ENCODE measurements at regions of chr15 and their contacts with region 1.

Region 1: GRCh38 chr15:72252663-72253299 is 19.6 kb downstream of the PARP6 start:
- DNase-seq: no peak
- H3K4me3 ChIP-seq: no peak overlapping the region
- H3K4me3 Mint-ChIP-seq: no peak overlapping the region
- H3K27ac ChIP-seq: no peak overlapping the region
- H3K27ac Mint-ChIP-seq: no peak overlapping the region
- H3K4me1 ChIP-seq: peaks cover 9 to 13% of the 10 kb centered on the region in 2 donors
- H3K4me1 Mint-ChIP-seq: peaks cover 11% of the 10 kb centered on the region
- H3K27me3 ChIP-seq: no peaks in the 10 kb centered on the region
- H3K27me3 Mint-ChIP-seq: peaks cover 0 to 3% (median 0%) of the 10 kb centered on the region in 3 donors
- CTCF ChIP-seq: no peak

Region 2: GRCh38 chr15:72155635-72156616 is 96.9 kb before region 1 on chr15:
- intact Hi-C with region 1: no loop called
- DNase-seq: peak; percentile 70 to 75 (median 74)
- H3K4me3 ChIP-seq: peak overlapping the region; percentile 35 to 74 (median 46)
- H3K4me3 Mint-ChIP-seq: peak overlapping the region; percentile 81 to 92
- H3K27ac ChIP-seq: peak overlapping the region in 1 of 2 donors; percentile 34
- H3K27ac Mint-ChIP-seq: peak overlapping the region in 3 of 7 donors; percentile 7 to 42 (median 41)
- H3K4me1 ChIP-seq: peaks cover 20 to 23% of the 10 kb centered on the region in 2 donors
- H3K4me1 Mint-ChIP-seq: peaks cover 23% of the 10 kb centered on the region
- H3K27me3 ChIP-seq: no peaks in the 10 kb centered on the region
- H3K27me3 Mint-ChIP-seq: peaks cover 3 to 9% (median 3%) of the 10 kb centered on the region in 3 donors
- CTCF ChIP-seq: peak; percentile 89

Region 3: GRCh38 chr15:72166719-72167470 is 85.9 kb before region 1 on chr15:
- intact Hi-C with region 1: no loop called
- DNase-seq: no peak
- H3K4me3 ChIP-seq: no peak overlapping the region
- H3K4me3 Mint-ChIP-seq: no peak overlapping the region
- H3K27ac ChIP-seq: no peak overlapping the region
- H3K27ac Mint-ChIP-seq: no peak overlapping the region
- H3K4me1 ChIP-seq: no peaks in the 10 kb centered on the region
- H3K4me1 Mint-ChIP-seq: no peaks in the 10 kb centered on the region
- H3K27me3 ChIP-seq: no peaks in the 10 kb centered on the region
- H3K27me3 Mint-ChIP-seq: peaks cover 2 to 4% (median 3%) of the 10 kb centered on the region in 3 donors
- CTCF ChIP-seq: no peak

Region 4: GRCh38 chr15:72217216-72217615 is 35.6 kb before region 1 on chr15:
- intact Hi-C with region 1: loop called (anchors 5 kb)
- DNase-seq: no peak
- H3K4me3 ChIP-seq: no peak overlapping the region
- H3K4me3 Mint-ChIP-seq: no peak overlapping the region
- H3K27ac ChIP-seq: peak overlapping the region in 1 of 2 donors; percentile 54
- H3K27ac Mint-ChIP-seq: peak overlapping the region in 5 of 7 donors; percentile 46 to 90 (median 74)
- H3K4me1 ChIP-seq: peaks cover 22 to 28% of the 10 kb centered on the region in 2 donors
- H3K4me1 Mint-ChIP-seq: peaks cover 22% of the 10 kb centered on the region
- H3K27me3 ChIP-seq: no peaks in the 10 kb centered on the region
- H3K27me3 Mint-ChIP-seq: no peaks in the 10 kb centered on the region
- CTCF ChIP-seq: no peak

Region 5: DNA sequence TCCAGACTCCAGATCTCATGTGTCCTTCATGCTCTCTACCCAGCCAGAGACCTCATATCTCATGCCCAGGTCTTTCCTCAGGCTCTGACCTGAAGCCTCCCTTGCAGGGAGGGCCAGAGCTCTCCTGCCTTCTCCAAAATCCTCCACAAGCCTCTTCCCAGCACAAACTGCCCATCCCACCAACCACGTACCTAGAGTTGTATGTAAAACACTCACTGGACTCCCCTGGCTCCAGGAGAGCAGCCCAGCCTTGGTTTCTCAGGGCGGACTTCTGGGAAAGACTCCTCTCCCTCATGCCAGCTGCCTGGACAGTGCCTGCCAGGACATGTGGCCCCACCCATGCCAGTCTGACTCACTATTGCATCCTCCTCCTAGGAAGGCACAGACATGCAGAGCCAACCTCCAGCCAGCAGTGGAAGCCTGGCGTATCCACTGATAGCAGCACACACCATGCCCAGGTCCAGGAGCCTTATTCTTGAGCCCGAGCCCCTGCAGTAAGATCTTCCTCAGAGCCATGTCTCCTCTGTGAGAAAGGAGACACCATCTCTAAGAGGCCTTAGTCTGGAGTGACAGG is 30.4 kb before region 1 on chr15:
- intact Hi-C with region 1: loop called (anchors 5 kb)
- DNase-seq: peak; percentile 38 to 71 (median 54)
- H3K4me3 ChIP-seq: no peak overlapping the region
- H3K4me3 Mint-ChIP-seq: no peak overlapping the region
- H3K27ac ChIP-seq: peak overlapping the region; percentile 40 to 82
- H3K27ac Mint-ChIP-seq: peak overlapping the region; percentile 83 to 89 (median 87)
- H3K4me1 ChIP-seq: peaks cover 64 to 75% of the 10 kb centered on the region in 2 donors
- H3K4me1 Mint-ChIP-seq: peaks cover 64% of the 10 kb centered on the region
- H3K27me3 ChIP-seq: no peaks in the 10 kb centered on the region
- H3K27me3 Mint-ChIP-seq: no peaks in the 10 kb centered on the region
- CTCF ChIP-seq: no peak